Motor neuron (in vitro differentiated cells): ENCODE measurements at regions of chr3 and their contacts with region 1.

Region 1: DNA sequence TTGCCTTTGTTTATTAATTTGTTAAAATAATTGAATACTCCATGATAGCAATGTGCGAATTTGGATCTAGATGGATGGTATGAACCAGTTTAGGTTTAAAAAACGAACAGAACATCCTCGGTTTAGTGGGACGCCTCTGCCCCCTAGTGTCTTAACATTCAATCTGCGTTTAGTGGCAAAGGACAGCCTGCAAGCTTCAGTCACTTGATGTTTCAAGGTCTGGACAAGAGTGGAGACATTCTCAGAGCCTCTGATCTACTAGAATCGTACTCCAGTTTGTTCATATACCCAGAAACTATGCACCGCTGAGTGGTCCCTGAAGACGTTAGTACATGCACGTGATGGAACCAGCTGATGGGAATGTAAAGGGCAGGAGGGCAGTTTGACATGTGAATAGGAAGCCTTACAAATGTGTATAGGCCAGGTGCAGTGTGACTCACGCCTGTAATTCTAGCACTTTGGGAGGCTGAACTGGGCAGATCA is 17.8 kb upstream of the ATP13A4 start:
- ATAC-seq: peak; percentile 73 to 96 (median 93)
- H3K4me3 ChIP-seq: no peak overlapping the region
- H3K27ac ChIP-seq: no peak overlapping the region
- H3K4me1 ChIP-seq: no peaks in the 10 kb centered on the region

Region 2: GRCh38 chr3:192566706-192567290 is 1005.7 kb before region 1 on chr3:
- in situ Hi-C with region 1: loop called in 3 of 9 experiments (anchors 25 kb)
- ATAC-seq: peak; percentile 52 to 88 (median 80)
- H3K4me3 ChIP-seq: no peak overlapping the region
- H3K27ac ChIP-seq: no peak overlapping the region
- H3K4me1 ChIP-seq: no peaks in the 10 kb centered on the region

Region 3: DNA sequence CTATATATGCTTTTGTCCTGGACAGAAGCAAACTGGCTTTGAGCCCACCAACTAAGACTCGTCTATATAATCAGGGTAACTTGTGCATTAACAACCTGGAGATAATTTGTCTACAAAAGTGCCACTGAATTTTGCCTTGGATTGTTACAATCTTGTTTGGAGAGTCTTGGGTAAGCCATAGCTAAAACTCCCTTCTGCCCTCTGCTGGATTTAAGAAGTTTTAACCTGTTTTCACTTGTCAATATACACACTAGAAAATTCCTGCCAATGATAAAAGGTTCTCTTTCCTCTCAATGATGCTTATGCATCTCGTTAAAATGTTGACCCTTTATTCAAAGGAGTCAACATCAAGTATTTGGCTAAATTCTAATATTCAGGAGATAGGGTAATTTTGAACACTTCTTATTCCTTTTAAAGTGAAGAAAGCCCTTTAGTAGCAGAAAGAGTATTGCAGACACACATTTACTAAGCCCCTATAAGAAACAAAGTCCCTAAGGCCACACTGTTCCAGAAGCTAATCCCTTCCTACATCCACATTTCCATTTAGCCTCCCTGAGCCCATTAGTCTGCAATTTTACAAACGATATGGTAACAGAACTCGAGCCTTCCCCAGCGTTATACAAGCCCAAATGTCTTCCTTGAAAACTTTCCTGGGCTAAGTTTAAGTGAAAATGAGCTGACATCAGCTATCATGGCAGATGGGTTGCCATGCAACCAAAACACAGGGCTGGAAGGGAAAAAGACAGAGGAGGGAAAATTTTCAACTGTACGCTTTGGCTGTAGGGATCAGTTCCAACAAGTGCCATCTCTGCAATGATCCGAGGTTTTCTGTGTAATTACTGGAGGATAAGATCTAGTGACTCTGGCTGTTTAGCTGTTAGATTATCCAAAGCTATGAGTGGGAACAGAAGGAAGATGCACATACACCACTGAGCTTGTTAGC is 769.2 kb before region 1 on chr3:
- in situ Hi-C with region 1: loop called in 5 of 9 experiments (anchors 25 kb)
- ATAC-seq: peak in 5 of 8 experiments; percentile 47 to 86 (median 79)
- H3K4me3 ChIP-seq: no peak overlapping the region
- H3K27ac ChIP-seq: no peak overlapping the region
- H3K4me1 ChIP-seq: peaks cover 0 to 4% of the 10 kb centered on the region in 2 donors

Region 4: GRCh38 chr3:192816351-192816750 is 756.1 kb before region 1 on chr3:
- in situ Hi-C with region 1: loop called in 8 of 9 experiments (anchors 5 to 25 kb)
- ATAC-seq: peak in 3 of 8 experiments; percentile 29 to 61 (median 31)
- H3K4me3 ChIP-seq: no peak overlapping the region
- H3K27ac ChIP-seq: no peak overlapping the region
- H3K4me1 ChIP-seq: peaks cover 33 to 47% of the 10 kb centered on the region in 2 donors

Region 5: GRCh38 chr3:193040836-193041672 is 531.4 kb before region 1 on chr3:
- in situ Hi-C with region 1: loop called in 1 of 9 experiments (anchors 25 kb)
- ATAC-seq: peak in 3 of 8 experiments; percentile 55 to 65 (median 61)
- H3K4me3 ChIP-seq: no peak overlapping the region
- H3K27ac ChIP-seq: no peak overlapping the region
- H3K4me1 ChIP-seq: peaks cover 2 to 4% of the 10 kb centered on the region in 2 donors

Region 6: GRCh38 chr3:193207290-193208273 is 364.9 kb before region 1 on chr3:
- in situ Hi-C with region 1: loop called in 1 of 9 experiments (anchors 25 kb)
- ATAC-seq: peak in 6 of 8 experiments; percentile 14 to 98 (median 53)
- H3K4me3 ChIP-seq: no peak overlapping the region
- H3K27ac ChIP-seq: no peak overlapping the region
- H3K4me1 ChIP-seq: peaks cover 5 to 12% of the 10 kb centered on the region in 2 donors

Region 7: GRCh38 chr3:193452338-193452737 is 120.1 kb before region 1 on chr3:
- in situ Hi-C with region 1: loop called in 1 of 9 experiments (anchors 25 kb)
- ATAC-seq: peak in 3 of 8 experiments; percentile 78 to 85 (median 83)
- H3K4me3 ChIP-seq: no peak overlapping the region
- H3K27ac ChIP-seq: no peak overlapping the region
- H3K4me1 ChIP-seq: peaks cover 3 to 4% of the 10 kb centered on the region in 2 donors